Activated CD4-positive, alpha-beta T cell treated with anti-CD3 and anti-CD28 coated beads for 36 hours (primary cell): ENCODE measurements at regions of chr3 and their contacts with region 1.

Region 1: GRCh38 chr3:153621953-153622352 is 459.9 kb downstream of the RAP2B start:
- DNase-seq: peak; percentile 27
- ATAC-seq: peak; percentile 63
- H3K4me3 Mint-ChIP-seq: peak overlapping the region; percentile 30
- H3K27ac Mint-ChIP-seq: peak overlapping the region; percentile 55
- H3K4me1 Mint-ChIP-seq: peaks cover 58% of the 10 kb centered on the region
- H3K27me3 Mint-ChIP-seq: no peaks in the 10 kb centered on the region

Region 2: DNA sequence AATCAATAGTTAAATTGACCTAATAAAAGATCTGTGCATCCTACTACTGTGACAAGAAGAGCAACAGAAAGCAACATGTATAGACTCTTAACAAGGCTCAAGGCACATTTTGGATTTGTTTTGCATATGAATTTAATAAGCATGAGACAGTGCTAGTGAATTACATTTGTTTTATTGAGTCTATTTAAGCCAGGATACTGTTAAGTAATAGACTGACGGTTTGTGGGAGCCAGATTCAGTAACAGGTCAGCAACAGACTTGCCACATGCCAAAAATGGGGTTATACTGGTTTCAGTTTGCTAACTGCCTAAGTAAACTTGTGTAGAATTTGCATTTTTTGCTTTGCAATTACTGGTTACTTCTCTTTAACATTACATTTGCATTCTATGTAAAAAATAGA is 1299.2 kb before region 1 on chr3:
- CTCF ChIA-PET with region 1: no interaction called
- POLR2A ChIA-PET with region 1: no interaction called
- intact Hi-C with region 1: loop called in 1 of 2 experiments (anchors 10 kb)
- DNase-seq: no peak
- ATAC-seq: no peak
- H3K4me3 Mint-ChIP-seq: peak overlapping the region; percentile 18
- H3K27ac Mint-ChIP-seq: peak overlapping the region; percentile 48
- H3K4me1 Mint-ChIP-seq: peaks cover 82% of the 10 kb centered on the region
- H3K27me3 Mint-ChIP-seq: no peaks in the 10 kb centered on the region

Region 3: GRCh38 chr3:153138276-153139210 is 483.4 kb before region 1 on chr3:
- CTCF ChIA-PET with region 1: no interaction called
- POLR2A ChIA-PET with region 1: no interaction called
- intact Hi-C with region 1: loop called (anchors 2 to 5 kb)
- DNase-seq: peak; percentile 86
- ATAC-seq: peak; percentile 89
- H3K4me3 Mint-ChIP-seq: no peak overlapping the region
- H3K27ac Mint-ChIP-seq: peak overlapping the region; percentile 76
- H3K4me1 Mint-ChIP-seq: peaks cover 26% of the 10 kb centered on the region
- H3K27me3 Mint-ChIP-seq: peaks cover 3% of the 10 kb centered on the region

Region 4: GRCh38 chr3:153285194-153285641 is 336.7 kb before region 1 on chr3:
- CTCF ChIA-PET with region 1: no interaction called
- POLR2A ChIA-PET with region 1: no interaction called
- intact Hi-C with region 1: loop called in 1 of 2 experiments (anchors 5 kb)
- DNase-seq: no peak
- ATAC-seq: no peak
- H3K4me3 Mint-ChIP-seq: no peak overlapping the region
- H3K27ac Mint-ChIP-seq: peak overlapping the region; percentile 16
- H3K4me1 Mint-ChIP-seq: peaks cover 43% of the 10 kb centered on the region
- H3K27me3 Mint-ChIP-seq: no peaks in the 10 kb centered on the region

Region 5: DNA sequence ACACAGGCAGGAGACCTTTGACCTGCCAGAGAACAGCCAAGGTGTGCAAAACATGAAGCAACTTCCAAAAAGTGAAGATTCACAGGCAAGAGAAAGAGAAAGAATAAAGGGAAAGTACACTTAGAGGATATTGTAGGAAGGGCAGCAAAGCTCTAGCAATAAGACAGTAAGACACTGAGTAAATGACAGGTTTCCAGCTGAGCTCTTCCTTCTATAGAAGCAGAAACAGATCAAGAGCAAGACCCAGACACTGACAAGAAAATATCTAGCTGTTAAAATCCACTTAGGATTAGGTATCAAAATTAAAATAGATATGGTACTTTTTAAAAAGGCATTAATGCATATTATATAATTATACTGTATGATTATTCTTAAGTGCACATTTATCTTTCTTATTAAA is 126.5 kb before region 1 on chr3:
- CTCF ChIA-PET with region 1: no interaction called
- POLR2A ChIA-PET with region 1: no interaction called
- intact Hi-C with region 1: no loop called
- DNase-seq: no peak
- ATAC-seq: no peak
- H3K4me3 Mint-ChIP-seq: no peak overlapping the region
- H3K27ac Mint-ChIP-seq: no peak overlapping the region
- H3K4me1 Mint-ChIP-seq: no peaks in the 10 kb centered on the region
- H3K27me3 Mint-ChIP-seq: no peaks in the 10 kb centered on the region

Region 6: DNA sequence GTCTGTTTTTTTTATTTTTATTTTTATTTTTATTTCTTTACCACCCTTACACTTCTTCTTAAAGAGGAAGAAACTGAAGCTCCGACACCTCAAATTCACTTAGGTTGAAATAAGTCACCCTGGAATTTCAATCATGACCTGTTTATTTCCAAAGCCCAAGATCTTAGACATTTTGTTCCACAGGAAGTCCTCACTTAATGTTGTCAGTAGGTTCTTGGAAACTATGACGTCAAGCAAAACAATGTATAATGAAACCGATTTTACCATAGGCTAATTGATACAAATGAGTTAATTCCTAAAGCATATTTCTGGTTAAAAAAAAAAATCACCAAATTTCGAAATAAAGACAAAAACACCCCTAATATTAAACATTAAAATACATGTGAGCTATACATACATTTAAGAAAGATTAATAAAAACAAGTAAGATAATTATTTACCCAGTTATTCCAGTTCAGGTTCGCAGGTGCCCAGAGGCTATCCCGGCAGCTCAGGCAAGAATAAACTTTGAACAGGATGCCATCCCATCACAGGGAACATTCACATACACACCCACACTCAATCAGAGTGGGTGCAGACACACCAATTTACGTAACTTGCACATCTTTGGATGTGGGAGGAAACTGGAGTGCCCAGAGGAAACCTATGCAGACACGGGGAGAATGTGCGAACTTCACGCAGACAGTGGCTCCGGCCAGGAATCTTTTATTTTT is 68.9 kb before region 1 on chr3:
- CTCF ChIA-PET with region 1: no interaction called
- POLR2A ChIA-PET with region 1: no interaction called
- intact Hi-C with region 1: loop called (anchors 1 to 5 kb)
- DNase-seq: no peak
- ATAC-seq: no peak
- H3K4me3 Mint-ChIP-seq: no peak overlapping the region
- H3K27ac Mint-ChIP-seq: no peak overlapping the region
- H3K4me1 Mint-ChIP-seq: peaks cover 14% of the 10 kb centered on the region
- H3K27me3 Mint-ChIP-seq: no peaks in the 10 kb centered on the region

Region 7: DNA sequence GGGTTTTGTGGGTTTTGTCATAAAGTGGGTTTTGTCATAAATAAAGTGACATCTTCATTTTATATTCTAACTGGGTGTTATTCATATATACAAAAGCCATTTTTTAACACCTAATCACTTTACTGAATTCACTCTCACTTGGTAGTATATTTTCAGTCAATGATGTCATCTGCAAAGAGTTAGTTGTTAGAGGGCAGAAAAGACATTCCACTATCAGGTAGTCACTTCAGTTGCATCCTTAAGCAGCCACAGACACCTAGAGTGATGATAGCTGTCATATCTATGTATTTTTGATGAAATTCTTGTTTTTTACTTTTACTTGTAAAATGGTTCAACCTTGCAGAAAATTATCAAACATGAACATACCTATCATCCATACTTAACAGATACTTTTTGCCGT is 613.4 kb after region 1 on chr3:
- CTCF ChIA-PET with region 1: no interaction called
- POLR2A ChIA-PET with region 1: no interaction called
- intact Hi-C with region 1: loop called in 1 of 2 experiments (anchors 1 kb)
- DNase-seq: no peak
- ATAC-seq: no peak
- H3K4me3 Mint-ChIP-seq: no peak overlapping the region
- H3K27ac Mint-ChIP-seq: no peak overlapping the region
- H3K4me1 Mint-ChIP-seq: peaks cover 12% of the 10 kb centered on the region
- H3K27me3 Mint-ChIP-seq: peaks cover 26% of the 10 kb centered on the region

Region 8: DNA sequence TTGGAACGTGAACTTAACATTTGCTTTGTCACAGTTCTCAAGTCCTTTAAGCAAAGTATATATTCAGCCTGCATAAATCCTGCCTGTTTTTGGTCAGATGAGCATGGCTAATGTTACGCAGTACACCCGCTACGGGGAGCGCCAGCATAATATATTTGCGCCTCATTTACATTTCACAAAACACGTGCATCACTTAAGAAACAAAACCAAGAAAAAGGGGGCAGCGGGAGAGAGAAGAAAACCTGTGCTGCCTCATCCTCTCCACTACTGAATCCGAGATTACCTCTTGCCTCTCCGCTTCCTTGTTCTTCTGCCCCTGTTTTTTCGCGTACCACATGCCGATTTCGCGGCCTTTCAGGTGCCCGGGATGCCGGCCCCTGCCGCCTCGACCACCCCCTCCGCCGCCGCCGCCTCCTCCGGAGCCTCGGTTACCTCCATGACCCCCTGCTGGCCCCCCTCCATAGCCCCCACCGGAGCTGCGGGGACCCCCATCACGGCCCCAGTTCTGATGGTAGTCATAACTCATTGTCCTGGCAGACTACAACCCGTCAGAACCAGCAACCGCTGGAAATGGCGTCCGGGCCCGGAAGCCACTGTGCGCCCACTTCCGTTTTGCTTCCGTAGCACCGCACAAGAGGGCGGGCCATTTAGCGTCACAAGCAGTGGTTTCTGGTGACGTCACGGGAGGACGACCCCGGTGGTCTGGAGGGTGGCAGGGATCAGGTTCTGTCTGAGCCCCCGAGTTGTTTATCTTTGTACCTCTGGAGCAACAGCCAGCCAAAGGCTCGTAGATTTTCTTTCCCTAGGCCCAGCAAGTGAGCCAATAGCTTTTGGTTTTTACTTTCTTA is 702.2 kb after region 1 on chr3 and contains the start of gene DHX36:
- CTCF ChIA-PET with region 1: no interaction called
- POLR2A ChIA-PET with region 1: no interaction called
- intact Hi-C with region 1: loop called in 1 of 2 experiments (anchors 5 kb)
- DNase-seq: peak; percentile 93
- ATAC-seq: peak; percentile 91
- H3K4me3 Mint-ChIP-seq: peak within 1 kb of the TSS; percentile 85
- H3K27ac Mint-ChIP-seq: peak within 1 kb of the TSS; percentile 97
- H3K4me1 Mint-ChIP-seq: peaks cover 25% of the 10 kb centered on the region
- H3K27me3 Mint-ChIP-seq: no peaks in the 10 kb centered on the region
- total RNA-seq, gene DHX36: 56.3 to 74.6 TPM